Mammary epithelial cell (primary cell): ENCODE measurements at regions of chr3 and their contacts with region 1.

Region 1: DNA sequence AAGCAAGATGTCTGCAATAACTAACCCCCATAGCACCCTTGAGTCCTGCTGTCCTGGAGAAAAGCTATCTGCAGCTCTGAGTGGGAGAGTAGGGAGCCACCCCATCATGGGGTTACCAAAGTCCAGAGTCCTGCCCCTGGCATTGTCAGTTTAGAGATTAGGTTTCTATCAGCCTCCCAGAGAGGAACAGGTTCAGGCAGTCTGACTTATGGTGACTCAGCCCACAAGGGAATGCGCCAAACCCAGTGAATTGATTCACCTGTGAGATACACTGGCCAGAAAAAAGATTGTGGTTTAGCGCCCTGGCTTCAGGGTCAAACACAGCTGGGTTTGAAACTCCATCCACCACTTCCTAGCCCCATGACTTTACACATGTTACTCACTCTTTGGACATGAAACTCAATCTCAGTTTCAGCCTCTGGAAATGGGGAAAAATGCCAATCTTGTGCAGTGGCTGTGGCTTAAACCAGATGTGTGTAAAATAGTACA is 263.6 kb upstream of the HES1 start:
- DNase-seq: peak; percentile 100
- H3K4me3 ChIP-seq: no peak overlapping the region
- H3K27ac ChIP-seq: peak overlapping the region; percentile 94
- H3K4me1 ChIP-seq: peaks cover 71% of the 10 kb centered on the region
- H3K27me3 ChIP-seq: no peaks in the 10 kb centered on the region
- CTCF ChIP-seq: no peak

Region 2: DNA sequence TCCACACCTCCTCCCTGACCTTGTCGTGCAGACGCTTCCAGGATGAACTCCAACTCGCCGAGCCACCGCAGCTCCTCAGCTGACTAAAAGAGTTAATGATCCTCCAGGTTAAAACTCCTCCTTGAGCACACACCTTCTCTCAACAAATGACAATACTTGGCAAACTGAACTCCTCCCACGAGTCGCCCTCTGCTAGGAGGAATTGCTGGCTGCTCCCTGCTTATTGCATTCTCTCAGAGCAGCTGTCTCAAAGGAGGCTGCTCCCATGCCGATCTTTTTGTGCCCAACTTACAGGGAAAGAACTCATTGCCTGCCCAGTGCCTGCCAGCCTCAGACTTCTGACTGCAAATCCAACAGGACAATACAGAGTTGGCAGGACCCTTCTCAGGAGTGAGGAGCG is 317.5 kb before region 1 on chr3 and contains the start of gene ATP13A4:
- CTCF ChIA-PET with region 1: no interaction called
- dilution Hi-C with region 1: no loop called
- in situ Hi-C with region 1: no loop called
- intact Hi-C with region 1: no loop called
- DNase-seq: no peak
- H3K4me3 ChIP-seq: no peak within 1 kb of the TSS
- H3K27ac ChIP-seq: no peak within 1 kb of the TSS
- H3K4me1 ChIP-seq: no peaks in the 10 kb centered on the region
- H3K27me3 ChIP-seq: peaks cover 8% of the 10 kb centered on the region
- CTCF ChIP-seq: no peak
- total RNA-seq, gene ATP13A4: 2.7 TPM in 1 of 2 donors, not detected in the other

Region 3: DNA sequence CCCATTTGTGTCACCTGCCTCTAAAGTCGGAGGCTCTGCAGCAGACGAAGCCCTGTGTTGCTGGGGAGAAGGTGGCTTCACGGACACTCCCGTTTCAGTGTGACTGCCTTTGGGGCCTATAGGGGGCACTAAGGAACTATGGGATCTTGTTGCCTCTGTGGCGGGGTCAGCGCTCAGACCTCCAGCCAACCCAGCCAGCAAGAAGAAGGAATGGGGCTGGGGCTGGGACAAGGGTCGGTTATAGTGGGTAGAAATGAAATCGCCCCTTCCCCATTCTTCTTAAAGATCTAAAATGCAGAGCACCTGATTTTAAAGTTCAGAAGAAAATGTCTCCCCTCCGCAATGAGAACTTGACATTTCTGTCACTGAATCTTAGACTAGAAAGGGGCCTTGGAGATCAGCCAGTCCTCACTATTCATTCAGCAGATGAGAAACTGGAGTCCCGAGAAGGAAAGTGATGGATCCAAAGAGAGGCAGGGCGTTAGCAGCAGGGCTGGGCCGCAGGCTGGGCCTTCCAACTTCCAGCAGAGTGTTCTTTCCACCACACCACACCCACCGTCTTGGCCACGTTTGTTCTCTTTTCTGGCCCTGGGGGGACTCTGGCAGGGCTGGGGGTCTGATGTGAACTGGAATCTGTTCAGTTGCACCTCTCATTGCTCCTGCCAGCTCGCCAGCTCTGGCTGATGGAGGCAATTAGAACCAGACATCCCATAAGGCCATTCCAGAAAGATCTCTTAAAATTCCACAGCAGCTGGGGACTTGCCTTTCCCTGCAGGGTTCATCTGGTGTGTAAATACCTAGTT is 83.9 kb before region 1 on chr3:
- CTCF ChIA-PET with region 1: no interaction called
- dilution Hi-C with region 1: no loop called
- in situ Hi-C with region 1: loop called in 1 of 2 experiments (anchors 10 kb)
- intact Hi-C with region 1: no loop called
- DNase-seq: no peak
- H3K4me3 ChIP-seq: no peak overlapping the region
- H3K27ac ChIP-seq: no peak overlapping the region
- H3K4me1 ChIP-seq: peaks cover 11% of the 10 kb centered on the region
- H3K27me3 ChIP-seq: no peaks in the 10 kb centered on the region
- CTCF ChIP-seq: peak; percentile 34 to 47

Region 4: GRCh38 chr3:193971261-193971751 is 99.0 kb after region 1 on chr3:
- CTCF ChIA-PET with region 1: no interaction called
- dilution Hi-C with region 1: loop called (anchors 5 kb)
- in situ Hi-C with region 1: no loop called
- intact Hi-C with region 1: no loop called
- DNase-seq: peak; percentile 76
- H3K4me3 ChIP-seq: no peak overlapping the region
- H3K27ac ChIP-seq: no peak overlapping the region
- H3K4me1 ChIP-seq: peaks cover 26% of the 10 kb centered on the region
- H3K27me3 ChIP-seq: no peaks in the 10 kb centered on the region
- CTCF ChIP-seq: no peak

Region 5: GRCh38 chr3:194070634-194071409 is 198.5 kb after region 1 on chr3:
- CTCF ChIA-PET with region 1: no interaction called
- dilution Hi-C with region 1: loop called (anchors 5 kb)
- in situ Hi-C with region 1: no loop called
- intact Hi-C with region 1: no loop called
- DNase-seq: peak; percentile 95
- H3K4me3 ChIP-seq: peak overlapping the region; percentile 18 to 40 (median 24)
- H3K27ac ChIP-seq: peak overlapping the region; percentile 61
- H3K4me1 ChIP-seq: peaks cover 20% of the 10 kb centered on the region
- H3K27me3 ChIP-seq: no peaks in the 10 kb centered on the region
- CTCF ChIP-seq: no peak

Region 6: DNA sequence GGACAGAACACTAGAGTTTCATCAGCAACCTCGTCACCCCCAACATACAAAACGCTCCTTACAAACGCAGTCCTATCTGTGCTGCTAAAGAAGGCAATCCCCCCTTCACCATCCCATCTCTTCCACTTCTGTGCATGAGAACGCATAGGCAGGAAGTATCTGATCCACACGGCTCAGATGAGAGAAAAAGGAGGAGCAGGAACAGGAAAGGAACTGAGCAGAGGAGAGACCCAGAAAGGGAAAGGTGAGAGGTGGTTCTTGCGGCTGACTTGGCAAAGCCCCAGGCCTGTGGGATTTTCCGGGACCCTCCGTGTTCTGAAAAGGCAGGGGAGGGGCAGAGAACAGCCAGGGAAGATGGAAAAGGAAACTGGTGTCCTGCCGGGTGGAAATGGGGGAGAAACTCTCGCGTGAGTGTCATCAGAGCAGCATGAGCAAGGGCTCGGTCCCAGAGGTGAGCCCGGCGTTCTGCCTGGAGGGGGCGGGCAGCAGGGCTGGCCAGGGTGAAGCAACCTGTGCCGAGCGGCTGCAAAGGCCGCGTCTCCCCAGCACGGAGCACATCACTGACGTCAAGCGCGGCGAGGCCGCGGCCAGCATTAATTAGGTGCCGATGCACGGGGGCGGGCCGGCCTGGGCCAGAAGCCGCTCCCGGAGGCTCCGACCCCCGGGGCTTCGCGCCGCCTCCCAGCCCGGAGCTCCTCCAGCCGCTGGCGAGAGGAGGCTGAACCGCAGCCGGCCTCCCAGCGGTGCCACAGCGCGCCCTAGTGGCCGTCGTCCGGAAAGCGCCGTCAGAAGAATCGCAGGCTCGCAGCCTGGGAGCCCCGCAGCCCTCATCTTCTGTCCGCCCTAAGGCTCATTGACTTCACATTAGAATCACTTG is 443.0 kb after region 1 on chr3:
- CTCF ChIA-PET with region 1: no interaction called
- dilution Hi-C with region 1: loop called (anchors 5 kb)
- in situ Hi-C with region 1: no loop called
- intact Hi-C with region 1: loop called (anchors 2 kb)
- DNase-seq: peak; percentile 89
- H3K4me3 ChIP-seq: peak overlapping the region; percentile 26 to 51 (median 30)
- H3K27ac ChIP-seq: peak overlapping the region; percentile 63
- H3K4me1 ChIP-seq: peaks cover 16% of the 10 kb centered on the region
- H3K27me3 ChIP-seq: no peaks in the 10 kb centered on the region
- CTCF ChIP-seq: peak; percentile 73 to 92